Tibial artery (tissue), 4 donors: ENCODE measurements at regions of chr11 and their contacts with region 1.

Region 1: DNA sequence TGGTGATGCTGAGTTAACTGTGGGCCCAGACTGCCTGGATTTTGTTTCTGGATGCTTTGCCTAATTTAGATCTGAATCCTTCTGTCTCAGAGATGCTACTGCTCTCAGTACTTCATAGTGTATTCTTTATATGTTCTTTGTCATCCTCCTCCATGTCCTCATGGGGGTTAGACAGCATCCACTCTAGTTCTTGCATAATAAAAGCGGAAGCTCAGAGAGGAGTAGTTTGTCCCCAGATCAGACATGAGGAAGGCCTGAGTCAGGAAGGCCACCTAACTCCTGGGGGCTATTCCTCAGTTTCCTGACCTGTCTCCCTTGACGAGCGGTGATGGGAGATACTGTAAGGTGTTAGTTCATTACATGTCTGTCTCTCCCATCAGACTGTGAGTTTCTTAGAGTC is 90.2 kb downstream of the SCN3B start:
- DNase-seq: no peak
- H3K4me3 ChIP-seq: no peak overlapping the region
- H3K27ac ChIP-seq: no peak overlapping the region
- H3K4me1 ChIP-seq: peaks cover 0 to 20% (median 10%) of the 10 kb centered on the region in 4 donors
- H3K27me3 ChIP-seq: peaks cover 0 to 4% of the 10 kb centered on the region in 2 donors
- CTCF ChIP-seq: no peak

Region 2: GRCh38 chr11:123509737-123510578 is 54.3 kb before region 1 on chr11:
- intact Hi-C with region 1: loop called (anchors 2 kb)
- DNase-seq: no peak
- H3K4me3 ChIP-seq: no peak overlapping the region
- H3K27ac ChIP-seq: no peak overlapping the region
- H3K4me1 ChIP-seq: no peaks in the 10 kb centered on the region
- H3K27me3 ChIP-seq: peaks cover 0 to 20% of the 10 kb centered on the region in 2 donors
- CTCF ChIP-seq: no peak